Activated CD8-positive, alpha-beta T cell treated with anti-CD3 and anti-CD28 coated beads for 36 hours (primary cell): ENCODE measurements at regions of chr11 and their contacts with region 1.

Region 1: GRCh38 chr11:64688534-64688982 is 34.4 kb downstream of the NRXN2 start:
- DNase-seq: peak; percentile 96
- ATAC-seq: peak; percentile 98
- H3K4me3 Mint-ChIP-seq: peak overlapping the region; percentile 38
- H3K27ac Mint-ChIP-seq: no peak overlapping the region
- H3K4me1 Mint-ChIP-seq: peaks cover 26% of the 10 kb centered on the region
- H3K27me3 Mint-ChIP-seq: peaks cover 9% of the 10 kb centered on the region
- CTCF ChIP-seq: peak; percentile 93

Region 2: DNA sequence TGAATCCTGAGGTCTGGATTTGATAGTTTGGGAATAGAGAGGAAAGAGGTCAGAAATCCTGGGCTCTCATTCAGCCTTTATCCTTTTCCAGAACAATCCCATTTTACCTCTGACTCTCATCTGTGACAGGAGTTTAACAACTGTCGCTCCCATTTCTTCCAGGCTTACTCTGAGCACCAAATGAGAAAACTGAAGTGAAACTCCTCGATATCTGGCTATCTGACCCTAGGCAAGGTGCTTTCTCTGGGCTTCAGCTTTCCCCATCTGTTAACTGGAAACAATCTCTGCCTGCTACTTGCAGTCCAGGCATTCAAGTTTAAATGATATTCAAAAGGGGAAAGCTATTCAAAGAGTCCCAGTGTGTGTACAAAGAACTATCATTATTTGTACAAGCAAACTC is 15.7 kb before region 1 on chr11:
- CTCF ChIA-PET with region 1: interaction called, 11 read pairs
- POLR2A ChIA-PET with region 1: no interaction called
- intact Hi-C with region 1: no loop called
- DNase-seq: no peak
- ATAC-seq: no peak
- H3K4me3 Mint-ChIP-seq: no peak overlapping the region
- H3K27ac Mint-ChIP-seq: no peak overlapping the region
- H3K4me1 Mint-ChIP-seq: peaks cover 2% of the 10 kb centered on the region
- H3K27me3 Mint-ChIP-seq: peaks cover 26% of the 10 kb centered on the region
- CTCF ChIP-seq: no peak

Region 3: DNA sequence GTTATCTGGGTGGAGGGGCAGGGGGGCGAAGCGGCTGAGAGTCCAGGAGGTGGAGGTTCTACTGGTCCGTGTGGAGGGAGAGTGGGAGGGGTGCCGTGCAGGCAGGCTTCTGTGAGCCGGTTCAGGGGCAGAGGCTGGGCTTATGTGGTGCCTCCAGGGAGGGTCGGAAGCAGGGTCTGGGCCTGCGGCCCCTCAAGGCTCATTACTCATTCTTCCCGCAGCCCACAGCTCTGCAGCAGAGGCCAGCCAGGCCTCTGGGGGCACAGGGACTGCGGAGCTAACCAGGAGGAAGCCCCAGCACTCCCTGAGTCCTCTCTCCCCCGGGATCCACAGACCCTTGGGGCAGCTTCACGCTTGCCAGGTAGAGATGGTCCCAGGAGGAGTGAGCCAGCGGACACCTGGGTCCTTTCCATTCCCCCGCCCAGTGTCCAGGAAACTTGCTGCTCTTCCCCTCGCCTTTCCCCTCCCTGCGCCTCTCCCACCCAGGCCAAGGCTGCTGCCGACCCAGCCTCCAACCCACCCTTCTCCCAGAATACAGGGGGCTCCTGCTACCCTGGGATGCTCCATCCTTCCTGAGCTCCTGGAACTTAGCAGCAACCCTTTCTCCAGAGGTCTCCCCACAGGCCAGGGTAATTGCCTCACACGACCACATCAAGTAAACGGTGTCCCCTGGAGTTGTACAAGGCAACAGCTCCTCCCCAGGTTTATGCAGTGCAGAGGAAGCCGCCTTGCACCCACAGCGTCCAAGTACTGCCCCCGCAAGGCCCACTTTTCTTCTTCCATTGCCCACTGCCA is 28.1 kb after region 1 on chr11:
- CTCF ChIA-PET with region 1: interaction called, 13 read pairs
- POLR2A ChIA-PET with region 1: interaction called, 4 read pairs
- intact Hi-C with region 1: loop called (anchors 5 kb)
- DNase-seq: no peak
- ATAC-seq: no peak
- H3K4me3 Mint-ChIP-seq: no peak overlapping the region
- H3K27ac Mint-ChIP-seq: no peak overlapping the region
- H3K4me1 Mint-ChIP-seq: peaks cover 8% of the 10 kb centered on the region
- H3K27me3 Mint-ChIP-seq: peaks cover 51% of the 10 kb centered on the region
- CTCF ChIP-seq: no peak

Region 4: GRCh38 chr11:64734811-64735724 is 46.5 kb after region 1 on chr11:
- CTCF ChIA-PET with region 1: interaction called, 11 read pairs
- POLR2A ChIA-PET with region 1: no interaction called
- intact Hi-C with region 1: loop called (anchors 10 kb)
- DNase-seq: no peak
- ATAC-seq: no peak
- H3K4me3 Mint-ChIP-seq: no peak overlapping the region
- H3K27ac Mint-ChIP-seq: peak overlapping the region; percentile 71
- H3K4me1 Mint-ChIP-seq: peaks cover 18% of the 10 kb centered on the region
- H3K27me3 Mint-ChIP-seq: no peaks in the 10 kb centered on the region
- CTCF ChIP-seq: no peak

Region 5: DNA sequence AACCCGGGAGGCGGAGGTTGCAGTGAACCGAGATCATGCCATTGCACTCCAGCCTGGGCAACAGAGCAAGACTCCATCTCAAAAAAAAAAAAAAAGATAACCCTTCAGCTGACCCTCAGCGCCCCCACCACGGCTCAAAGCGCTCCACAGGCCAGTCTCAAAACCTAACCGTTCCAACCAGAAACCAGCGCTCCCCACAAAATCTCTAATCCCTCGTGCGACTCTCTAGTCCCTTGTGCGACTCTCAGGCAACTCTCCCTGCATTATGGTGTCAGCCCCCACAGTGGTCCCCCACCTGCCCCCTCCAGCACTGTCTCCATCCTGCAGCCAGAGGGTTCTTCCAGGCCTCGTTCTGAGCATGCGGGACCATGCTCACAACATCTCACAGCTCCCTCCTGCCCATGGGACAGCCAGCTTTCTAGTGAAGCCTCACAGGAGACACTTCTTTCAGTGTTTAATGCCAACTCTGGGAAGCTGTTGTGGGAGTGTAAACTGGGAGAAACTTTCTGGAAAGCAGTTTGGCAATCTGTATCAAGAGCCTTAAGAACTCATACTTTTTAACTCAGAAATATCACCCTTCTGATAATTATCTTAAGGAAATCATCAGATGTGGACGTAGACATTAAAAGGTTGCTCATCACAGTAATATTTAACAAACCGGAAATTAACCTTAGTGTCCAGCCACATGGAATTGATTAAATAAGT is 59.6 kb after region 1 on chr11:
- CTCF ChIA-PET with region 1: interaction called, 54 read pairs
- POLR2A ChIA-PET with region 1: interaction called, 3 read pairs
- intact Hi-C with region 1: loop called (anchors 10 kb)
- DNase-seq: no peak
- ATAC-seq: no peak
- H3K4me3 Mint-ChIP-seq: no peak overlapping the region
- H3K27ac Mint-ChIP-seq: no peak overlapping the region
- H3K4me1 Mint-ChIP-seq: peaks cover 23% of the 10 kb centered on the region
- H3K27me3 Mint-ChIP-seq: no peaks in the 10 kb centered on the region
- CTCF ChIP-seq: no peak